Heart right ventricle (tissue), 16 donors: ENCODE measurements at regions of chr17 and their contacts with region 1.

Region 1: GRCh38 chr17:70901870-70902269 is 732.5 kb downstream of the KCNJ2 start:
- DNase-seq: no peak
- ATAC-seq: no peak
- H3K4me3 ChIP-seq: no peak overlapping the region
- H3K27ac ChIP-seq: no peak overlapping the region
- H3K4me1 ChIP-seq: no peaks in the 10 kb centered on the region
- H3K27me3 ChIP-seq: no peaks in the 10 kb centered on the region
- CTCF ChIP-seq: no peak

Region 2: GRCh38 chr17:70945386-70945785 is 43.5 kb after region 1 on chr17:
- intact Hi-C with region 1: loop called in 1 of 10 experiments (anchors 5 kb)
- DNase-seq: no peak
- ATAC-seq: no peak
- H3K4me3 ChIP-seq: no peak overlapping the region
- H3K27ac ChIP-seq: no peak overlapping the region
- H3K4me1 ChIP-seq: no peaks in the 10 kb centered on the region
- H3K27me3 ChIP-seq: no peaks in the 10 kb centered on the region
- CTCF ChIP-seq: no peak